ENCODE measurements at regions of chr1 and their contacts with region 1.

Region 1: DNA sequence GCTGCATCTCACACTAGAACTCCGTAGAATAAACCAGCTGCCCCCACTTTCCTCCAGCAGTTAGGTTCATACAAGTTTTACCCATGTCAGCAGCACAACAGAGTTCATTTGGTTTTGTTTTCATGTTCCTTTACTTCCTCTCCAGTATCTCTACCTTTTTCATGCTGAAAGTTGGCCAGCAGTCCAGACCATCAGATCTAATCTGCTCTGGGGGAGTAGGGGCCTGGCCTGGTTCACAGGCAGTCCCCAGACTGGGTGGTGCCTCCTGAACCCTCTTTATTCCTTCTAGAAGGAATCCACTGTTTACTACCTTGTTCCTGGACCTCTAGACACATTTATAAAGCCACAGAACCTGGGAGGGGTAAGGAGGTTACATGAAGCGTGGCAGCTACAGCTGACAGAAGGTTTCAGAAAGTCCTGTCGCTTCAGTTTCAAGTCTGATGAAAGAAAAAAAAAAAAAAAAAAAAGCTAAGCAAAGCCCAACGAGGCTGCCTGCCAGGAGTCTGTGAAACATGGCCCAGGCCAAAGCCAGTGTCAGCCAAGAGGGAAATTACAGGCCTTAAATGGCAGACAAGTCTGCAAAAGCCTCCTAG is 184.6 kb upstream of the JUN start:
- DNase-seq: peak in 6 of 14 experiments; percentile 3 to 60 (median 35)
- ATAC-seq: peak; percentile 81
- H3K4me3 ChIP-seq: no peak overlapping the region
- H3K4me3 Mint-ChIP-seq: peak overlapping the region; percentile 5
- H3K27ac ChIP-seq: peak overlapping the region; percentile 62 to 65
- H3K27ac Mint-ChIP-seq: peak overlapping the region; percentile 86
- H3K4me1 ChIP-seq: peaks cover 30% of the 10 kb centered on the region
- H3K4me1 Mint-ChIP-seq: peaks cover 42% of the 10 kb centered on the region
- H3K27me3 ChIP-seq: no peaks in the 10 kb centered on the region
- H3K27me3 Mint-ChIP-seq: no peaks in the 10 kb centered on the region
- CTCF ChIP-seq: no peak

Region 2: GRCh38 chr1:58932859-58933598 is 35.4 kb before region 1 on chr1:
- CTCF ChIA-PET with region 1: no interaction called
- POLR2A ChIA-PET with region 1: no interaction called
- intact Hi-C with region 1: loop called in 1 of 2 experiments (anchors 5 kb)
- DNase-seq: peak in 4 of 14 experiments; percentile 20 to 51 (median 30)
- ATAC-seq: no peak
- H3K4me3 ChIP-seq: no peak overlapping the region
- H3K4me3 Mint-ChIP-seq: no peak overlapping the region
- H3K27ac ChIP-seq: no peak overlapping the region
- H3K27ac Mint-ChIP-seq: no peak overlapping the region
- H3K4me1 ChIP-seq: peaks cover 18% of the 10 kb centered on the region
- H3K4me1 Mint-ChIP-seq: peaks cover 52% of the 10 kb centered on the region
- H3K27me3 ChIP-seq: no peaks in the 10 kb centered on the region
- H3K27me3 Mint-ChIP-seq: no peaks in the 10 kb centered on the region
- CTCF ChIP-seq: no peak